ENCODE measurements at regions of chr14 and their contacts with region 1.

Region 1: DNA sequence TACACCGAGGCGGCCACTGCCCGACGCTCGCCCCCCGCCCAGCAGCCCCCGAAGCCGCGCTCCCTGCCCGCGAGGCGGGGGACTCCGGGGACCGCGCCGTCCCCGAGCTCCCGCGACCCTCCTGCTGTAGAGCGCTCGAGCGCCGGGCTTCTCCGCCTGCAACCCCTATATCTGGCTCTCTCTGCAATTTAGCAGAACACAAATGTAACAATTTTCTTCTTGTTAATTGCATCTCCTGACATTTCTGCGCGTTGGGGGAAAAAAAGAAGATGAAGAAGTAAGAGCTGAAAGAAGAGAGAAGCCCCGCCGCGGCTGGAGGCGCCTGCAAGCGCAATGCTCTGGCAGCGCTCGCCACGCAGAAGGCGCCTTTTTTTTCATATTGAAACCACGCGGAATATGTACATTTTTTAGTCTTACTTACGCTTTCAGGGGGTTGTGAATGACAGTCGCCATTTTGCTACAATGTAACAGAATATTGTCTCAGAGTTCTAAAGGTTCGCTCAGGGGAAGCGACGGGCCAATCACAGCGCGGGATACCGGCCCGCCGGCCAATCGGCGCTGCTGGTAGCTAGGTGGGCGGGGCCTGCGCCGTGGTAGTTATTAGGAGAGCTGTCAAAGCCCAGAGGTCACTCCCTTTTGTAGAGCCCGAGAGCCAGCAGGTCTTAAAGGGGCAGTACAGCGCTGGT is at the start of gene DPF3:
- DNase-seq: peak; percentile 96
- H3K4me3 ChIP-seq: peak within 1 kb of the TSS; percentile 68 to 97 (median 91)
- H3K27ac ChIP-seq: peak within 1 kb of the TSS in 5 of 8 donors; percentile 41 to 70 (median 63)
- H3K4me1 ChIP-seq: peaks cover 11 to 40% (median 27%) of the 10 kb centered on the region in 6 donors
- H3K27me3 ChIP-seq: peaks cover 0 to 76% (median 22%) of the 10 kb centered on the region in 7 donors
- CTCF ChIP-seq: no peak
- POLR2A ChIP-seq: no peak
- total RNA-seq, gene DPF3: 2.5 to 8.9 (median 3.5) TPM

Region 2: GRCh38 chr14:72350215-72350614 is 543.6 kb before region 1 on chr14:
- intact Hi-C with region 1: no loop called
- DNase-seq: no peak
- H3K4me3 ChIP-seq: no peak overlapping the region
- H3K27ac ChIP-seq: no peak overlapping the region
- H3K4me1 ChIP-seq: no peaks in the 10 kb centered on the region
- H3K27me3 ChIP-seq: peaks cover 0 to 5% (median 0%) of the 10 kb centered on the region in 7 donors
- CTCF ChIP-seq: no peak
- POLR2A ChIP-seq: no peak

Region 3: DNA sequence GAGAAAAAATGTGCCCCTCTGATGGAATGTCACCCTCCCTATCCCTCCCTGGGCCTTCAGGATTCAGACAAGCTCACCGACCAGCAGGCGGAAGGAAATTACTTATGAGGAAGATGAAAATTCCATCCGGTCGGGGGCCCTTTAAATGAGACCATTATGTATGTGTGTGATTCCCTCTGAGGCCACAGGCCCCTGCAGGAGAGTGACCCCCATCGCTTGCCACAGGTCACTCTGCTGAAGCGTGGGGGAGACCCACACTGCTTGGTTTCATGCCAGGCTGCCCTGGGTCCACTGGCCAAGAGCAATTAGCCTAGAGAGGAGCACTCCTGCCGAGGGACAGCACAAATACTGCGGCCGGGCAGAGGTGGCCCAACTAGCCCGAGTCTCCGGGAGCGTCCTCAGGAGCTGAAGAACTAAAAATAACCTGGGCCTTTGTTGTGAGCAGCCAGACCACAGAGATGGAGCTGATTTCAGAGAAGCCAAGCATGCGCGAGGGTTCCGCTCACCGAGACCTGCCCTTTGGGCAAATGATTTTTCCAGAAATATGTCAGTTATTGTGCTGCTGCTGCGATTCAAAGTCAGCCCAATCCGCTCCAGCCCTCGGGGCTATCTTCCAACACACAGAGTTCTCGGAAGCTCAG is 276.3 kb before region 1 on chr14:
- intact Hi-C with region 1: loop called (anchors 10 kb)
- DNase-seq: no peak
- H3K4me3 ChIP-seq: no peak overlapping the region
- H3K27ac ChIP-seq: peak overlapping the region in 7 of 8 donors; percentile 41 to 64 (median 52)
- H3K4me1 ChIP-seq: peaks cover 13 to 67% (median 48%) of the 10 kb centered on the region in 6 donors
- H3K27me3 ChIP-seq: no peaks in the 10 kb centered on the region
- CTCF ChIP-seq: no peak
- POLR2A ChIP-seq: no peak

Measured in spleen (tissue), 13 donors.